ENCODE measurements at regions of chr20 and their contacts with region 1.

Region 1: DNA sequence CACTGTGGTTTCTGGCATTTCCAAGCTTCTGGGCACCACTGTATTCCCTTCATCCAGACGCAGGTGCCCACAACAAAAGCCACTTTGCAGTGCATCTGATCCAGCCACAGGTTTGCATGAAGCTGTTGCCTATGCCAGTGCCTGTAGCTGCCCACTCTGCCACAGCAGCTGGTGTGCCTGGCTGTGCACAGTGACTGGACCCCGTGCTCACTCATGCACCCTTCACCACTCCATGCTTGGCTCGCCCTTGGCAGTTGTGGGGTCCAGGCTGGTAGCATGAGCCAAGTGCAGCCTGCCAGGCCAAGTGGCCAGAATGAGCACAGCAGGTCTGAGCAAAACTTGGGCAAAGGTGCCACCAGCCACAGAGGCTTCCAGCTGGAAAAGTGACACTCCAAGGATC is 42.7 kb downstream of the SEL1L2 start:
- DNase-seq: no peak
- H3K4me3 ChIP-seq: no peak overlapping the region
- H3K27ac ChIP-seq: no peak overlapping the region
- H3K4me1 ChIP-seq: no peaks in the 10 kb centered on the region
- H3K27me3 ChIP-seq: no peaks in the 10 kb centered on the region
- CTCF ChIP-seq: no peak
- EP300 ChIP-seq: no peak
- POLR2A ChIP-seq: no peak

Region 2: GRCh38 chr20:13784893-13785715 is 162.6 kb before region 1 on chr20 and contains the starts of genes ESF1 and NDUFAF5:
- intact Hi-C with region 1: no loop called
- DNase-seq: peak; percentile 97
- H3K4me3 ChIP-seq: peak within 1 kb of the TSS; percentile 72 to 84 (median 78)
- H3K27ac ChIP-seq: peak within 1 kb of the TSS; percentile 85 to 90 (median 88)
- H3K4me1 ChIP-seq: peaks cover 20 to 53% (median 39%) of the 10 kb centered on the region in 4 donors
- H3K27me3 ChIP-seq: no peaks in the 10 kb centered on the region
- CTCF ChIP-seq: no peak
- EP300 ChIP-seq: no peak
- POLR2A ChIP-seq: no peak
- total RNA-seq, gene ESF1: 9.0 to 16.2 (median 13.3) TPM
- total RNA-seq, gene NDUFAF5: 11.9 to 23.3 (median 19.1) TPM

Region 3: GRCh38 chr20:13819885-13820645 is 127.7 kb before region 1 on chr20:
- intact Hi-C with region 1: loop called (anchors 5 kb)
- DNase-seq: no peak
- H3K4me3 ChIP-seq: no peak overlapping the region
- H3K27ac ChIP-seq: peak overlapping the region in 1 of 4 donors; percentile 7
- H3K4me1 ChIP-seq: no peaks in the 10 kb centered on the region
- H3K27me3 ChIP-seq: no peaks in the 10 kb centered on the region
- CTCF ChIP-seq: peak; percentile 68 to 72 (median 71)
- EP300 ChIP-seq: no peak
- POLR2A ChIP-seq: no peak

Region 4: DNA sequence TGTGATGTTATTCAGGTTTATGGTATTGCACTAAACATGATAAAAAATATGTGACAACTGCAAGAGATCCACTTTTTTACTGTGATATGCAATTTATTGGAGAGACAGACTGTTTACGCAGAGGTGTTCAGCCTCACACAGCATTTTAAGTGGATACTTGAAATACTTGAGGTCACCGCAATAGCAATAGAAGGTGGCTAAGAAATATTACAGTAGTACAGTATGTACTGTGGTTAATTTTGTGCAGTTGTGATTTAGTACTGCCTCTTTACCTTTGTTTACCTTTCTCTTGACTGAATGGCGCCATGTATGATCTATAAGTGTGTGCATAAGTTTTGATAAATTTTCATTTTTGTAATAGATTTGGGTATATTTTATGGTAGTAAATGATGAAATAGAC is 65.0 kb after region 1 on chr20:
- intact Hi-C with region 1: no loop called
- DNase-seq: no peak
- H3K4me3 ChIP-seq: no peak overlapping the region
- H3K27ac ChIP-seq: no peak overlapping the region
- H3K4me1 ChIP-seq: no peaks in the 10 kb centered on the region
- H3K27me3 ChIP-seq: no peaks in the 10 kb centered on the region
- CTCF ChIP-seq: no peak
- EP300 ChIP-seq: no peak
- POLR2A ChIP-seq: no peak

Region 5: GRCh38 chr20:14902432-14903089 is 954.8 kb after region 1 on chr20:
- intact Hi-C with region 1: no loop called
- DNase-seq: no peak
- H3K4me3 ChIP-seq: no peak overlapping the region
- H3K27ac ChIP-seq: no peak overlapping the region
- H3K4me1 ChIP-seq: no peaks in the 10 kb centered on the region
- H3K27me3 ChIP-seq: no peaks in the 10 kb centered on the region
- CTCF ChIP-seq: no peak
- EP300 ChIP-seq: no peak
- POLR2A ChIP-seq: no peak